ENCODE measurements at regions of chr16 and their contacts with region 1.

Region 1: DNA sequence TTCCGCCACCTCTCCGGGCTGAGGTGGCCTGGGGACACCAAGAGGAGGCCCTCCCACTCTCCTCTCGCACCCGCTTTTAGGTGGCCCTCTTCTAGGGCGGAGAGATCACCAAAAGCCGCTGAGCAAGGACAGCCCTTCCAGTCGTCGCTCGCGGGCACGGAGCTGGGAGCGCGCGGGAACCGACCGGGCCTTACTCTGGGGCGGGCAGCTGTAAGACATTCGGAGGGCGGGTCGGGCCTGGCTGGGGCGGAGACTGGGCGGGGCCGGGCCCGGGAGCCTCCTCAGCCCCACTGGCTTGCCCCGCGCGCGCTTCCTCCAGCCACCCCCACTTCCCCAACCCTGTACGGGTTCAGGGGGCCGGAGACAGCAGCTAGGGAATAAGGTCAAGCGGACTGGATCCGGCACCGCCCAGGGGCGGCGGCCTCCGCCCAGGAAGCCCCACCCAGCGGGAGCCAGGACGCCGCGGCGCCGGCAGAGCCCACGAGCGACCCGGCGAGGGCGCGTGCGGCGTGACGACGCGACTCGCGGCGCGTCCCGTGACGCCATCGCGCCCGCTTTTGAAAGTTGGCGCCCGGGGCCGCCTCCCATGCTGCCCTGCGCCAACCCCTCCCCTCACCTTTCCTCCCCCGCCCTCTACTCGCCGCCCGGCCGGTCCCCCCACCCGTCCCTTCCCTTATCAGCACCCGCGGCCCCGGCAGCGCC is 351 bp upstream of the CTCF start:
- DNase-seq: peak; percentile 92
- H3K4me3 ChIP-seq: peak overlapping the region; percentile 86 to 97
- H3K27ac ChIP-seq: peak overlapping the region; percentile 94 to 99
- H3K4me1 ChIP-seq: peaks cover 14% of the 10 kb centered on the region
- H3K27me3 ChIP-seq: no peaks in the 10 kb centered on the region
- CTCF ChIP-seq: no peak
- POLR2A ChIP-seq: peak; percentile 76

Region 2: GRCh38 chr16:67191995-67192681 is 369.8 kb before region 1 on chr16 and contains the start of gene E2F4:
- intact Hi-C with region 1: no loop called
- DNase-seq: peak; percentile 89
- H3K4me3 ChIP-seq: peak within 1 kb of the TSS; percentile 88 to 91
- H3K27ac ChIP-seq: peak within 1 kb of the TSS; percentile 35 to 41
- H3K4me1 ChIP-seq: peaks cover 17% of the 10 kb centered on the region
- H3K27me3 ChIP-seq: no peaks in the 10 kb centered on the region
- CTCF ChIP-seq: peak in 2 of 4 experiments; percentile 30 to 40
- POLR2A ChIP-seq: peak; percentile 22
- total RNA-seq, gene E2F4: 91.6 to 105 TPM

Region 3: DNA sequence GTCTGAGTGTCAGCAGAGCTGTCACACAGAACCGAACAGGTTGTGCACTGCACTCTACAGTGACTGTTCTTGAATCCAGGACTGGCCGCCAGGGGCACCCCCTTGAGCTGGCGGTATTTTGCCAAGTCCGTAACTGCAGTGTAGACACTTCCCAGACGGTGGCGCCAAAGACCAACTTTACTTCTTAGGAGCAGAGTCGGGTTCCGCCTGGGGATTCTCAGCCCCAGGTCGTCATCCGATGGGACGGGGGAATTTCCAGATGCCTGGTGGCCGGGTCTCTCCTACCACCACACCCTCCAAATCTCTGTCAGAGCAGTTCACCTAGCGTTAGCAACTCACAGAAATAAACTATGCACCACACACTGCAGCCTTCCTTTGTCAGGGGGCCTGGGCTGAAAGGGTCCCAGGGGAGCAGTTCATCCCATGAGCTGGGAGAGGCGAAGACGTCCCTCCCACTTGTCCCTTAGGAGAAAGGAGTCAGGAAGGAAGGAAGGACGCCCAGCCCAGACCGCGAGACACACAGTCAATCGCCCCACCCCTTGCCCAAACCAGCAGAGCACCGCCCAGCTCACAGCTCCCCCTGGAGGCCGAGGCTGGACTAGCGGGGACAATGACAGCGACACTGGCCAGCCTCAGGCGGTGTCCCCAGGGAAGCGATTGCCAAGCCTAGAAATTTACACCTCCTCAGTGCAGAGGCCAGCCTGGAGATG is 40.7 kb before region 1 on chr16:
- intact Hi-C with region 1: loop called (anchors 5 kb)
- DNase-seq: peak; percentile 96
- H3K4me3 ChIP-seq: peak overlapping the region; percentile 29 to 34
- H3K27ac ChIP-seq: peak overlapping the region; percentile 92 to 96
- H3K4me1 ChIP-seq: no peaks in the 10 kb centered on the region
- H3K27me3 ChIP-seq: no peaks in the 10 kb centered on the region
- CTCF ChIP-seq: peak; percentile 71 to 97 (median 90)
- POLR2A ChIP-seq: peak; percentile 63

Region 4: DNA sequence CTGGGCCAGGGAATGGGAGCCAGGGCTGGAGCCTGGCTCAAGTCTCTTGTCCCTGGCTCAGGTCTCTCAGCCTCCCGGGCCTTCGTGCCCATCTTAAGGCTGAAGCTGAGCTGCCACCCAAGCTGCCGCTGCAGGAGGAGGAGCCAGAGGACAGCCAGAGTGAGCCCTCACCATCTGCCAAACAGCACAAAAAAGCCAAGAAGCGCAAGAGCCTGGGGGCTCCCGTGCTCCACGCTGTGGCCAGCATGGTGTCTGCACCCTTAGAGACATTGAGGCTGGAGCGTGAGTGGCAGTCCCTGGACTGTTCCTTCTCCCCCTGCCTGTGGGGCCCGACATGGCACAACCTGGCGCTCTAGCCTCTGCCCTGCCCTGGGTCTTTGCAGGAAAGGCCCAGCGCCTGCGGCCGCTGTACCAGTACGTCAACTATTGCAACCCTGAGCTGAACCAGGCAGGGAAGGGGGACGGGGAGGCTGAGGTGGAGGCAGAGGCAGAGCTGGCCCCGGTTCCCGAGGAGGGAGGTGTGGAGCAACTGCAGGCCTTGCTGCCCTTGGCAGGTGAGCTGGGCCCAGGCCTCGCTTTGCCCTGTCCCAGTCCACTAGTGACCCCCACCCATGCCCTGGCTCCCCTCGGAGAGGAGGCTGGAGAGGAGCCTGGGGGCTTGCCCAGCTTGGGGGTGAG is 106.0 kb after region 1 on chr16:
- intact Hi-C with region 1: loop called (anchors 1 kb)
- DNase-seq: peak; percentile 86
- H3K4me3 ChIP-seq: peak overlapping the region; percentile 67 to 85
- H3K27ac ChIP-seq: peak overlapping the region; percentile 79 to 81
- H3K4me1 ChIP-seq: peaks cover 7% of the 10 kb centered on the region
- H3K27me3 ChIP-seq: no peaks in the 10 kb centered on the region
- CTCF ChIP-seq: peak; percentile 52 to 97 (median 87)
- POLR2A ChIP-seq: no peak

Region 5: DNA sequence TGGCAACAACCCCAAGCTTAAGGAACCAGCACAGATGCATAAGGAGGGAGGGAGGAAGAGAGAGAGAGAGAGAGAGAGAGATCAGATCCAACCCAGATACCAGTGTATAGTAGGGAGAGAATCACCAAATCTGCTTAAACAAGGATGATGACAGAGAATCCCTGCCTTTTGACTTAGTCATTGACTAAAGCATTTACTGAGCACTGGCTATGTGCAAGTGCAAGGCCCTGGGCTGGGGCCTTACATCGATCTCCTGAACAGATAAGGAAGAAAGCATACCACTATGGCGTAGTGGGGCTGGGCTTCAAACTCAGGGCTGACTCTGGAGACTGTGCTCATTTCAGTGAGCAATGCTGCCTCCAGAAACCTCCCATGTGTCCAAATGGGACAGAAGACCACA is 260.5 kb after region 1 on chr16:
- intact Hi-C with region 1: no loop called
- DNase-seq: no peak
- H3K4me3 ChIP-seq: no peak overlapping the region
- H3K27ac ChIP-seq: no peak overlapping the region
- H3K4me1 ChIP-seq: no peaks in the 10 kb centered on the region
- H3K27me3 ChIP-seq: no peaks in the 10 kb centered on the region
- CTCF ChIP-seq: no peak
- POLR2A ChIP-seq: no peak

Measured in prostate gland (tissue), 2 donors.